ENCODE measurements at regions of chr1 and their contacts with region 1.

Region 1: DNA sequence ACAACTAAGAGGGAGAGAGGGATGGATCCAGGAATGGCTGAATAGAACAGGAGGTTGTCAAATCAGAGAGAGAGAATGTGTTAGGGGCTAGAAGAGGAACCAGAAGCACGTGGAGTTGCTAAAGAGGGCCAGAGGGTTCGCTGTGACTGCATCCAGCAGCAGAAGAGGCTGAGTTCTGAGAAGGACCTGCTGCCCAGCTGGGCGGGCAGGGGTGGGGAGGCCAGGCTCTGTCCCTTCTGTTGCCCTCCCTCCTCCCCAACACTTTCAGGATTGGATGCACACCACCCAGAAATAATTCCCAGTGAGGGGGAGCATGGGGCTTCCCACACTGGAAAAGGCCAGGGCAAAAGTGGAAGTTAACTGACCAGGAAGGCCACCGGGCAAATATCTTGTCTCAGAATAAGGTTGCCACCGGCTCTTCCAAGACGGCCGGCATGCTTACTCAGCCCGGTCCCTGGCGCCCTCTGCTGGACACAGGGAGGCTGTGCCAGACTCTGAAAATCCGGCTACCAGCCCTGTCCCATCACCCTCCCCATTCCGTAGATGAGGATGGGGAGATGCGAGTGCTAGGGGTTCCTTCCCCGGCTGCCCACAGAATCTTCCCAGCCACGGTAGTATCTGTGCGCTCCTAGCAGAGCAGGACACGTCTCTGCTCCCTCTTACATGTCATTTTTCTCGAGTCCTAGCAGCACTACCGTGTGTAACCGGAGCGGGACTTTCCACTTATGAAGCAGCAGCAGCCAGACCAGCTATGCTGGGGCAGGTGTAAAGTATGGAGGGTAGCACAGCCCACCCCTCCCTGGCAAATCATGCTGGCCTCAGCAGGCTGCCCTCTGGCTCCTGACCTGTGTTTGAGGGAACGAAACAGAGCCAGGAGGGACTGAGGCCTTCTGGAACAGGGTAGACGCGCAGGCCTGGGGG is 46.8 kb upstream of the A3GALT2 start:
- DNase-seq: peak; percentile 84 to 95 (median 90)
- H3K4me3 ChIP-seq: peak overlapping the region in 9 of 59 donors; percentile 4 to 39 (median 15)
- H3K27ac ChIP-seq: peak overlapping the region in 58 of 59 donors; percentile 2 to 100 (median 96)
- H3K27me3 ChIP-seq: no peaks in the 10 kb centered on the region
- CTCF ChIP-seq: peak; percentile 81 to 99 (median 98)

Region 2: GRCh38 chr1:33181921-33182341 is 185.8 kb before region 1 on chr1 and contains the start of gene TRIM62:
- intact Hi-C with region 1: loop called in 1 of 2 experiments (anchors 10 kb)
- DNase-seq: peak; percentile 78 to 90 (median 84)
- H3K4me3 ChIP-seq: peak within 1 kb of the TSS; percentile 59 to 100 (median 82)
- H3K27ac ChIP-seq: peak within 1 kb of the TSS in 56 of 59 donors; percentile 42 to 91 (median 82)
- H3K27me3 ChIP-seq: no peaks in the 10 kb centered on the region
- CTCF ChIP-seq: peak in 12 of 56 donors; percentile 11 to 44 (median 22)
- total RNA-seq, gene TRIM62: 6.7 to 37.6 (median 13.9) TPM

Region 3: DNA sequence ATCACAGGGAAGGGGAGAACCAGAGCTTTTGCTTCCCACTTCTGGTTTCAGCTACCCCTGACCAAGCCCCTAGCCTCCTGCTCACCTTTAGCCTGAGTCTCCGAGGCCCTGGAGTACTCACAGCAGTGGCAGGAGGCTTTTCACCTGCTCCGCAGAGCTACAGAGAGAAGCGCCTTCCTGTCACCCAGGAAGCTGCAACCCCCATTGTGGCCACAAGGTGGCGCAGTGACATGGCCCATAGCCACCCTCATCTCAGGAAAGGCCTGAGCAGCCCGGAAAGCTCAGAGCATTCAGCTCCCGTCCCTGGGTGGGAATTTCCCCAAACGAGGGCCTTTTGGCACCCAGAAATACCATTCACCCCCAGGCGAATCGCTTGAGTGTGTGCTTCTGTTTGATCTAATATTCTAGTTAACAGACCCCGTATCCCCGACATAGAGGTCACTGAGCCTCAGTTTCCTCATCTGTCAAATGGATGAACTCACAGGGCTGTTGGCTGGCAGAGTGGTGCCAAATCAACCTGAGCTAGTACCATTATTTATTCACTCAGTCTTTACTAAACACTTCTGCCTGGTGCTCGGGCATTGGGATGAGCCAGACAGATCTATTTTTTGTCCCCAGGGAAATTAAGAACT is 72.2 kb before region 1 on chr1:
- intact Hi-C with region 1: loop called (anchors 1 to 2 kb)
- DNase-seq: peak; percentile 82 to 94 (median 91)
- H3K4me3 ChIP-seq: peak overlapping the region in 1 of 59 donors; percentile 14
- H3K27ac ChIP-seq: peak overlapping the region in 41 of 59 donors; percentile 0 to 72 (median 51)
- H3K27me3 ChIP-seq: no peaks in the 10 kb centered on the region
- CTCF ChIP-seq: peak; percentile 90 to 100 (median 96)

Region 4: DNA sequence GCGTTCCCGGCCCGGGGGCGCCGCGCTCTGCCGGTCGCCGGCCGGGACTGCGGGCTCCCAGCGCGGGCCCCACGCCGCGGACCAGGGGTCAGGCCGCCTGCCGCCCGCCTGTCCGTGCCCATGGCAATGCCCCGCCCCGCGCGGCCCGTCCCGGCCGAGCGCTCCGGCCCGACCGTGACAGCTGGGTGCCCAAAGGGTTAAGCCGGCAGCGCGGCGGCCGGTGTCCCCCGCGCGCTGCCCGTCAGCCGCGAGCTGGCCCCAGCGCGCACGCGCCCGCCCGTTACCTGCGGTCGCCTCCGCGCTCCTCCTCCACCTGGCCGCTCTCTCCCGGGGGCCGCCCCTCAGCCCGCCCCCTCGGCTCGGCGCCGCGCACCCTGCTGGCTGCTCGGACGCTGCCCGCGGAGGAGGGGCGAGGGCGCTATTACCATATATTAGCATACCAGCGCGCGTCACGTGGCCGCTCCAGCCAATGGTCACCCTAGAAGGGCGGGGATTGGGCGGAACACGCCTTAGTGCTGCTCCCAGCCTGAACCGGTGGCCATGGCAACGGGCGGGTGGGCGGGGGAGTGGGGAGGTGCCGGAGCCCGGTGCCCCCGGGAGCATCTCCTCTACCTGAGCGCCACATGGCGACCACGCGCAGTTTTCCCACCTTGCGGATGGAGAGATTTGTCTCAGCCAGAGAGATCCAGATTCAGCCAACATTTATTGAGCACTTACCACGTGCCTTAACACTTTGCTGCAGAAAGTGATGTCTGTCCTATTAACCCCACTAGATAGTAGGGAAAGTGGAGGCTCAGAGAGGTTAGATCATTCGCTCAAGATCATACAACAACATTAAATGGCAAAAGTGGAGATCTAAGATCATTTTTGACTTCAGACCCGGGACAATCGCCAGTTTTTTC is 63.2 kb after region 1 on chr1 and contains the start of gene PHC2:
- intact Hi-C with region 1: loop called in 1 of 2 experiments (anchors 5 kb)
- DNase-seq: peak; percentile 99 to 100 (median 100)
- H3K4me3 ChIP-seq: peak within 1 kb of the TSS; percentile 36 to 92 (median 81)
- H3K27ac ChIP-seq: peak within 1 kb of the TSS in 55 of 59 donors; percentile 7 to 91 (median 74)
- H3K27me3 ChIP-seq: no peaks in the 10 kb centered on the region
- CTCF ChIP-seq: peak in 53 of 56 donors; percentile 14 to 72 (median 47)
- total RNA-seq, gene PHC2: 68.2 to 158 (median 93.1) TPM

Measured in dorsolateral prefrontal cortex (tissue), 120 donors.